ENCODE measurements at regions of chr2 and their contacts with region 1.

Region 1: DNA sequence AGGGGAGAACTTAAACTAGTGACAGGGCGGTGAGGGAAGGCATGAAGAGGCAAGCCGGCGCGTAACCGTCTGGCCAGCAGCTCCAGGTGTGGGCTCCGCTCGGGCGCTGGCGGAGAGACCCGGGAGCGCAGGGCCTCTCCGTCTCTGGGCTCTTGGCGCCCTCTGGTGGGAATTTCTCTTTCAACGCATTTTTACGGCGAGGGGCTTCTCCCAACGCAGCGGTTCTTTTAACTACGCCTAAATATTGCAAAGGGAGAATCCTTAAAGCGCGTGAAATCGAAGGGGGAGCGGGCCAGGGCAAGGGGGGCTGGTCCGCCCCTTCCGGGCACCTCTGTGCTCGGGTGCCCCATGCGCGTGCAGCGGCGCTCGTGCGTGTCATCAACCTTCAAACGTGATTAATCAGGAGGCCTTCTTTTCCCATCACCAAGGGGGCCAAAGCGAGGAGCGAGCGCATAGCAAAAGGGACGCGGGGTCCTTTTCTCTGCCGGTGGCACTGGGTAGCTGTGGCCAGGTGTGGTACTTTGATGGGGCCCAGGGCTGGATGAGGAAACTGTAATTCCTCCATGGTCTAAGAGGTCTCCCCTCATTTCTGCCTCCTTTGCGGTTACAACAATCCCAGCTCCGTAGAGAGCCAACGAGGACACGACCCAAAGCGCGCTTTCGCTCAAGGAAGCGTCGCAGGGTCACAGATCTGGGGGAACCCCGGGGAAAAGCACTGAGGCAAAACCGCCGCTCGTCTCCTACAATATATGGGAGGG is 762 bp upstream of the GAD1 start:
- DNase-seq: peak; percentile 72
- H3K4me3 Mint-ChIP-seq: peak overlapping the region; percentile 81
- H3K27ac Mint-ChIP-seq: no peak overlapping the region
- H3K4me1 Mint-ChIP-seq: peaks cover 6% of the 10 kb centered on the region
- H3K27me3 Mint-ChIP-seq: peaks cover 47% of the 10 kb centered on the region
- CTCF ChIP-seq: peak; percentile 87

Region 2: DNA sequence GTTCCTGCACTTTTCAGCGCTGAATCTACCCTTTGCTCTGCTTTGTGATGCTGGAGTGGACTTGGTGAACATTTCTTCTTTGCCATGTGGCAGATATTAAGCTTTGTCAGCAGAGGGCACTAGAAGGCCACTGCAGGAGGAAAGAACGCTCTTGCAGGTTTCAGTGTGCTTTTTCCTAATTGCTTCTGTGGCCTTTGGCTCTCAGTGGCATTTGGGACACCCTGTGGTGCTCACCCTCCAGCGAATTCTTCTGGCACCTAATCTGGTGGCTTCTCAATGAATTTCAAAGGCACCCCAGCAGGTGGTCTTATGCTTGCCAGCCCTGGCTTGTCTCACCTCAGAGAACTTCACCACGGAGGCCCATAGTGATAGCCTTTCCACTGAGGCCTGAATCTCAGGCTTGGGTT is 491.3 kb before region 1 on chr2:
- CTCF ChIA-PET with region 1: interaction called, 11 read pairs
- POLR2A ChIA-PET with region 1: interaction called, 3 read pairs
- intact Hi-C with region 1: loop called (anchors 2 kb)
- DNase-seq: peak; percentile 58
- H3K4me3 Mint-ChIP-seq: no peak overlapping the region
- H3K27ac Mint-ChIP-seq: no peak overlapping the region
- H3K4me1 Mint-ChIP-seq: no peaks in the 10 kb centered on the region
- H3K27me3 Mint-ChIP-seq: no peaks in the 10 kb centered on the region
- CTCF ChIP-seq: peak; percentile 63

Region 3: DNA sequence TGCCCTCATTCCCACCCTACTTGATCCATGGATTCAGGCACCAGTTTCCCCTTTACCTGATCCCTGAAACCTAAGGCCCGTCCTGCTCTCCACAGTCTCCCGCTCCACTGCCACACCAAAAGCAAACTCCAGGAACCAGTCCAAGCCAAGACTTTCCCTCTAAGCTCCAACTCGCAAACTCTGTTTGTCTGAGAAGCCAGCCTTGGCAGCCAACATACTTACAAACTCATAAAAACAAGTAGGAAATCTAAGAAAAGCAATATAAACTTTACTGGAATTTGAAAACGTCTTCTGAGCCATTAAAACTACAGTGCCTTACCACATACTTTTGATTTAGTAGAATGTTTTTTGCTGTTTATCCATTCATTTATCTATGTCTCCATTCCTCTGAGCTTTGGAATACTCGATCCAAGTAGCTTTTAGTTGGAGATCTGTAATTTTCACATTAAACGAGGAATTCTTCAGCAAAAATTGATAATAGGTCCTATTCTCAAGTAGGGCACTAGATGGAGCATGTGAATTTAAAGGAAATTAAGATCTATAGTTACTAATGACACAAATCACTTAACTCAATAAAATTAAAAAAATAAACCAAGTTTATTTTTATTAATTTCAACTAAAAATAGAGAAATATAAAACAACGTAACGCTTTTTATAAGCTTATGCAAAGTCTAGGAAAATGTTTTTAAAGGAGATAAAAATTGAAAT is 438.3 kb before region 1 on chr2:
- CTCF ChIA-PET with region 1: interaction called, 103 read pairs
- POLR2A ChIA-PET with region 1: interaction called, 4 read pairs
- intact Hi-C with region 1: no loop called
- DNase-seq: no peak
- H3K4me3 Mint-ChIP-seq: no peak overlapping the region
- H3K27ac Mint-ChIP-seq: no peak overlapping the region
- H3K4me1 Mint-ChIP-seq: peaks cover 17% of the 10 kb centered on the region
- H3K27me3 Mint-ChIP-seq: peaks cover 11% of the 10 kb centered on the region
- CTCF ChIP-seq: no peak

Region 4: GRCh38 chr2:170409164-170409535 is 406.8 kb before region 1 on chr2:
- CTCF ChIA-PET with region 1: interaction called, 125 read pairs
- POLR2A ChIA-PET with region 1: interaction called, 8 read pairs
- intact Hi-C with region 1: loop called (anchors 1 kb)
- DNase-seq: peak; percentile 72
- H3K4me3 Mint-ChIP-seq: peak overlapping the region; percentile 54
- H3K27ac Mint-ChIP-seq: no peak overlapping the region
- H3K4me1 Mint-ChIP-seq: peaks cover 8% of the 10 kb centered on the region
- H3K27me3 Mint-ChIP-seq: peaks cover 22% of the 10 kb centered on the region
- CTCF ChIP-seq: peak; percentile 81

Region 5: DNA sequence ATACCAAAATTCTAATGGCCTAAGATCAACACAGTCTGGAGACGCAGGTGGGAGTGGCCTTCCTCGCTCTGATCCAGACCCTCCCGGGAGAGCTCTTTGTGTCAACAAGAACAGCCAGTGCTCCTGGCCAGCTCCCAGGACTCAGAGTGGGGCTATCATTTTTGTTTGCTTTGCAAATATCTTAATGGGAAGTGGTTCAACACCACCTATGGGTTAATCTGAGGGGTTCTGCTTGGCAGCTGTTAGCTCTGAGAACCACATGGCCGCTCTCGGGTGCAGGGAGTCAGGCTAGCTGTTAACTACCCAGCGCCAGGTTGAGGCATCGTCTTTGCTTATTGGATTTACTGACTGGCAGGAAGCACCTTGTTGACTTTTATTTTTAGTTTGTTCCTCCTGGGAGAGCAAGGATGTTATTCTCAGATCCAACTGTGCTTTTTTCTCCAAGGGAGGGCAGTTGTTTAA is 285.6 kb before region 1 on chr2:
- CTCF ChIA-PET with region 1: interaction called, 12 read pairs
- POLR2A ChIA-PET with region 1: interaction called, 3 read pairs
- intact Hi-C with region 1: no loop called
- DNase-seq: peak; percentile 81
- H3K4me3 Mint-ChIP-seq: no peak overlapping the region
- H3K27ac Mint-ChIP-seq: peak overlapping the region; percentile 29
- H3K4me1 Mint-ChIP-seq: peaks cover 19% of the 10 kb centered on the region
- H3K27me3 Mint-ChIP-seq: no peaks in the 10 kb centered on the region
- CTCF ChIP-seq: no peak

Region 6: DNA sequence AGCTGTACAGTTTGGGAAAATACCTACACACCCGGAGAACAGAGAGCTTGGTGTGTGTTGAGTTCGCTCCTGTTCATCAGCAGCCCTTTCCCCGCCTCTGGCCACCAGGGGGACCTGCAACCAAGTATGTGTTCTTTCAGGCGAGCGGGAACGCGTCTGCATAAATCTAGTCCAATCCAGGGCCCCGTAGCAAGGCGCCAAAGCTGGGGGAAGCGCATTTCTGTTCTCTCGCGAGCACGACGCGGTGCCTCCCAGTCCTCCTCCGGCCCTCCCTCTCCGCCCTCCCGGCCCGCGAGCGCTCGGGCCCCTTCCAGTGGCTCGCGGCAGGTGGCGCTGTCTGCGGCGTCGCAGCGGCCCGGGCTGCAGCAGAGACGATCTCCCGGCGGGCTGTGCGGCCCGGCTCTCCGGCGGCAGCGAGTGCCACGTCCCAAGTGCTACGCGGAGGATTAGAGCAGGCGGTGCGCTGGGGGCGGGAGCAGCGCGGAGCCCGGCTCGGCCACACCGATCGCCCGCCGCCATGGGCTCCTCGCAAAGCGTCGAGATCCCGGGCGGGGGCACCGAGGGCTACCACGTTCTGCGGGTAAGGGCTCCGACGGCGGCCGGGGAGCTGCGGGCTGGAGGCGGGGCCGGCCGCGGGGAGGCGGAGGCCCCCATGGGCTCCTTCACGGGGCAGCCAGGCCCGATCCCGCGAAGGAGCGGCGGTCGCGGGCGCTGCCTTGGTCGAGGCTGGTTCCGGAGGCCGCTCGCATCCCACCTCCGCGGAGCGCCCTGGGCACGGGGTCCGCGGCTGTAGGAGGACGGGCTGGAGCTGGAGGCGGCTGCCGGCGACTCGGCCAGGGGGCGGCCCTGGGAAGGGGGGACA is 113.1 kb after region 1 on chr2 and contains the start of gene GORASP2:
- CTCF ChIA-PET with region 1: interaction called, 7 read pairs
- POLR2A ChIA-PET with region 1: interaction called, 9 read pairs
- intact Hi-C with region 1: loop called (anchors 2 kb)
- DNase-seq: peak; percentile 100
- H3K4me3 Mint-ChIP-seq: peak within 1 kb of the TSS; percentile 86
- H3K27ac Mint-ChIP-seq: peak within 1 kb of the TSS; percentile 99
- H3K4me1 Mint-ChIP-seq: peaks cover 29% of the 10 kb centered on the region
- H3K27me3 Mint-ChIP-seq: no peaks in the 10 kb centered on the region
- CTCF ChIP-seq: peak; percentile 85
- total RNA-seq, gene GORASP2: 140 and 168 TPM in 2 replicates

Region 7: DNA sequence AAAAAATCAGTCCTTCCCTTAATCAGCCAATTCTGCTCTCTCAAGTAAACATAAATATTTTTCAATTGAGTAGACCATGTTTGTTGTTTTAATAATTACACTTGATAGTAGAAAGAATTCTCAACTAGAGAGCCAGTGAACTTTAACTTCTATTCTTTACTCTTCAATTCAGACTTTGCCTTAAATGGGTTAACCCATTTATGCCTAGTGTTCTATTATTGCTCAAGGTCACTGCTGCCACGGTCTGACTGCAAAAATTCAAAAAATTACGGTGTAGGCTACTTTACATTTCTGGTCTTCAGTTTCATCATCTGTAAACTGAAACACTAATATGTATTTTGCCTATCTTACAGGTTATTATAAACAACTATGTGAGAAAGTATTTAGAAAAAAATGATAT is 241.7 kb after region 1 on chr2:
- CTCF ChIA-PET with region 1: no interaction called
- POLR2A ChIA-PET with region 1: no interaction called
- intact Hi-C with region 1: no loop called
- DNase-seq: no peak
- H3K4me3 Mint-ChIP-seq: no peak overlapping the region
- H3K27ac Mint-ChIP-seq: no peak overlapping the region
- H3K4me1 Mint-ChIP-seq: no peaks in the 10 kb centered on the region
- H3K27me3 Mint-ChIP-seq: no peaks in the 10 kb centered on the region
- CTCF ChIP-seq: no peak

Region 8: DNA sequence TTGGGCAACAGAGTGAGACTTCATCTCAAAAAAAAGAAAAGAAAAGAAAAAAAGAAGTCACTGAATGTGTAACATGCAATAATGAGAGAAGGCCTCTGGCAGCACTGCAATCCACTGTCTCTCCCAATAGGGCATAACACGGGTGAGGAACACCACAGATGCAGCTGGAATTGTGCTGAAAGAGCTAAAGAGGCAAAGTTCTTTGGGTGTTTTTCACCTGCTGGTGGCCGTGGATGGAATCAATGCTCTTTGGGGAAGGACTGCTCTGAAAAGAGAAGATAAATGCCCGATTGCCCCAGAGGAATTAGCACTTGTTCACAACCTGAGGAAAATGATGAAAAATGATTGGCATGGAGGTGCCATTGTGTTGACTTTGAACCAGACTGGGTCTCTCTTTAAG is 675.4 kb after region 1 on chr2:
- CTCF ChIA-PET with region 1: no interaction called
- POLR2A ChIA-PET with region 1: no interaction called
- intact Hi-C with region 1: no loop called
- DNase-seq: no peak
- H3K4me3 Mint-ChIP-seq: no peak overlapping the region
- H3K27ac Mint-ChIP-seq: no peak overlapping the region
- H3K4me1 Mint-ChIP-seq: peaks cover 6% of the 10 kb centered on the region
- H3K27me3 Mint-ChIP-seq: no peaks in the 10 kb centered on the region
- CTCF ChIP-seq: no peak

Measured in MCF 10A (cell line).